Posterior vena cava (tissue), 2 donors: ENCODE measurements at regions of chr10 and their contacts with region 1.

Region 1: GRCh38 chr10:68052463-68052862 is 22.6 kb downstream of the HERC4 start:
- DNase-seq: no peak

Region 2: GRCh38 chr10:68110027-68110426 is 57.6 kb after region 1 on chr10:
- intact Hi-C with region 1: loop called in 1 of 2 experiments (anchors 2 kb)
- DNase-seq: no peak

Region 3: GRCh38 chr10:68334672-68335467 is 282.4 kb after region 1 on chr10:
- intact Hi-C with region 1: no loop called
- DNase-seq: no peak